Psoas muscle (tissue), 8 donors: ENCODE measurements at regions of chr17 and their contacts with region 1.

Region 1: GRCh38 chr17:10787306-10788045 is 16.4 kb downstream of the TMEM238L start:
- DNase-seq: no peak
- ATAC-seq: no peak
- H3K4me3 ChIP-seq: no peak overlapping the region
- H3K27ac ChIP-seq: no peak overlapping the region
- H3K4me1 ChIP-seq: peaks cover 5% of the 10 kb centered on the region
- H3K27me3 ChIP-seq: no peaks in the 10 kb centered on the region
- CTCF ChIP-seq: no peak

Region 2: GRCh38 chr17:10737168-10737622 is 50.3 kb before region 1 on chr17:
- intact Hi-C with region 1: loop called in 1 of 2 experiments (anchors 2 kb)
- DNase-seq: peak; percentile 34 to 69
- ATAC-seq: peak; percentile 80 to 91 (median 88)
- H3K4me3 ChIP-seq: no peak overlapping the region
- H3K27ac ChIP-seq: no peak overlapping the region
- H3K4me1 ChIP-seq: no peaks in the 10 kb centered on the region
- H3K27me3 ChIP-seq: no peaks in the 10 kb centered on the region
- CTCF ChIP-seq: peak; percentile 72